ENCODE measurements at regions of chr6 and their contacts with region 1.

Region 1: GRCh38 chr6:163460307-163460782 is 45.8 kb downstream of the QKI start:
- DNase-seq: peak; percentile 27
- H3K4me3 Mint-ChIP-seq: peak overlapping the region; percentile 88
- H3K27ac Mint-ChIP-seq: peak overlapping the region; percentile 90
- H3K4me1 Mint-ChIP-seq: peaks cover 74% of the 10 kb centered on the region
- H3K27me3 Mint-ChIP-seq: no peaks in the 10 kb centered on the region

Region 2: GRCh38 chr6:162379757-162380409 is 1080.5 kb before region 1 on chr6:
- intact Hi-C with region 1: no loop called
- DNase-seq: no peak
- H3K4me3 Mint-ChIP-seq: no peak overlapping the region
- H3K27ac Mint-ChIP-seq: no peak overlapping the region
- H3K4me1 Mint-ChIP-seq: no peaks in the 10 kb centered on the region
- H3K27me3 Mint-ChIP-seq: no peaks in the 10 kb centered on the region

Region 3: GRCh38 chr6:163490826-163491577 is 30.7 kb after region 1 on chr6:
- intact Hi-C with region 1: loop called (anchors 2 kb)
- DNase-seq: no peak
- H3K4me3 Mint-ChIP-seq: no peak overlapping the region
- H3K27ac Mint-ChIP-seq: no peak overlapping the region
- H3K4me1 Mint-ChIP-seq: peaks cover 13% of the 10 kb centered on the region
- H3K27me3 Mint-ChIP-seq: no peaks in the 10 kb centered on the region

Region 4: DNA sequence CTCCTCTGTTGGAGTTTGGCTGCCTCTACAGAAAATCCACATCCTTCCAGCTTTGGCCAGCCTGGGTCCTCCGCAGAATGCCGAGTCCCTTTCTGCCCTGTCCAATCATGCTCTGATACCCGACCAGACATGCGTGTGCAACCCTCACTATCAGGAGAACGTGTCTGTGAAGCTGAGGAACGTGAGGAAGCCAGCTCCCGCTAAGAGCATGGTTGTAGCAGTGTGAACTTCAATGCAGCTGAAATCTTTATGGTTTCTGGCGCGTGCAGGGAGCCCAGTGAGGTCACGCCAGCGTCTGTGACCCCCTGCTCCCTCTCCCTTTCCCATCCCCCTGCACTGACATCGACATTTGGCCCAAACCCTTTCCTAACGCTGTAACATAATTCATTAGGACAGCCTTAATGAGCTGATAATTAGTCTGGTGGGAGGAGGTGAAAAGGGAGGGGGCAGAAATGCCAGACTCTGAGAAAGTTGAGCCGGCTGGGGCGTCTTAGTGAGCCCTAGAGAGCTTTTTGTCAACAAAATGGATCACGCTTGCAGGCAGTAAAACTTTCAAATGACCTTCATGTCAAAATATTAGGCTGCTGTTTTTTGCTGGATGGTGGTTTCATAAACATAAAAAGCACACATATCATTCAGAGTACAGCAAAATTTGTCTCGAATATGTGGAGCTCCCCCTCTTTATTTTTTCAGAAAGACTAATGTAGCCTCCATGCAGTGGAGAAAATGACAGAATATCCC is 377.5 kb after region 1 on chr6:
- intact Hi-C with region 1: no loop called
- DNase-seq: no peak
- H3K4me3 Mint-ChIP-seq: no peak overlapping the region
- H3K27ac Mint-ChIP-seq: no peak overlapping the region
- H3K4me1 Mint-ChIP-seq: no peaks in the 10 kb centered on the region
- H3K27me3 Mint-ChIP-seq: no peaks in the 10 kb centered on the region